Activated CD4-positive, alpha-beta T cell treated with anti-CD3 and anti-CD28 coated beads for 36 hours (primary cell): ENCODE measurements at regions of chr5 and their contacts with region 1.

Region 1: DNA sequence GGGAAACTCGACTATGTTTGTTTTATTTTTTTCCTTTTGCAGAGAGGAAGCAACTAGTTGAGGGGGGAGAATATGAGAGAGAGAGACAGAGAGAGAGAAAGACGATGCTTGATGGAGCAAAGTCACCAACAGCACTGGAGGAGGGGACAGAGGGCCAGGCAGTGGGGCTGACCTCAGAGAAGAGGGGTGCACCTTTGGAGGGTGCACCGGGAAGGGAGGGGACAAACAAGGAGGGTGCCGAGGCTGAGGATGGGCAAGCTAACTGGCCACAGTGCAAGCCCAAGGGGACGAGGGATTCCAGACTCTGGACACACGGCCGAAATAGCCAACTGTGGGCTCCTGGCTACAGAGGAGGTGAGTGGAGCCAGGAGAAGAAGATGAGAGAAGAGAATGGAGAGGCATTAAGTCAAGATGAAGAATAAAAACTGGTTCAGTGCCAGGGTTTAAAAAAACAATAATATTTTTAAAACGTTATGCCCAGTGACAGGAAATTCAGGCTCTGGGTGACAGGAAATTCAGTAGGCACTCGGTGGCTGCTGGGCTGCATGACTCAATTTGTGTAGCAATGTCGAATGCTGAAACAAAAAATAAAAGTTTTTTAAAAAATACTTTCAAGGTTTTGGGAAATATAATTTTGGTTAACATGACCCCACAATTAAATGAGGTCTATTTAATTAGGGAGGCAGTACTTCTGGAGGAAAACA is 13.3 kb upstream of the GLRX start:
- DNase-seq: peak; percentile 49
- ATAC-seq: no peak
- H3K4me3 Mint-ChIP-seq: peak overlapping the region; percentile 79
- H3K27ac Mint-ChIP-seq: peak overlapping the region; percentile 91
- H3K4me1 Mint-ChIP-seq: peaks cover 44% of the 10 kb centered on the region
- H3K27me3 Mint-ChIP-seq: no peaks in the 10 kb centered on the region

Region 2: DNA sequence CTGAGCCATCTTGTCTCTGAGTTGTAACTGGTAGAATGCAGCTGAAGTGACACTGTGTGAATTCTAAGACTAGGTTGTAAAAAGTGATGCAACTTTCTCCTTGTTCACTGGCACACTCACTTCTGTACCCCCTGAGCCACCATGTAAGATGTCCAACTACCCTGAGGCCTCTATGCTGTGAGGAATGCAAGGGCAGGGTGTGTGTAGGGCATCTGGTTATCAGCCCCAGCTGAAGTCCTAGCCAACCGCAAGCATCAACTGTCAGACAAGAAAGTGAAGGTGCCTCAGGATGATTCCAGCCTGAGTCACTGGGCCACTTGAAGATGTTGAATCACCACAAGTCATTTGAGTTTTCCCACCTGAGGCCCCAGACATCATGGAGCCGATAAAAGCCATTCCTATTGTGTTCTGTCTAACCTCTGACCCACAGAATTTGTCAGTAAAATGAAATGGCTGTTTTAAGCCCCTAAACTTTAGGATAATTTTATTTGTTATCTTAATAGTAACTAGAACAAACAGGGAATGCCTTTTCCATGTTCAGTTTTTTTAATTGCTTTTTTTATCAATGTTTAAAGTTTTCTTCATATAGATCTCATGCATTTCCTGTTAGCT is 123.4 kb before region 1 on chr5:
- CTCF ChIA-PET with region 1: no interaction called
- POLR2A ChIA-PET with region 1: no interaction called
- intact Hi-C with region 1: no loop called
- DNase-seq: peak; percentile 78
- ATAC-seq: peak; percentile 95
- H3K4me3 Mint-ChIP-seq: no peak overlapping the region
- H3K27ac Mint-ChIP-seq: no peak overlapping the region
- H3K4me1 Mint-ChIP-seq: peaks cover 21% of the 10 kb centered on the region
- H3K27me3 Mint-ChIP-seq: peaks cover 4% of the 10 kb centered on the region

Region 3: GRCh38 chr5:95808686-95809413 is 27.0 kb before region 1 on chr5:
- CTCF ChIA-PET with region 1: interaction called, 6 read pairs
- POLR2A ChIA-PET with region 1: interaction called, 3 read pairs
- intact Hi-C with region 1: loop called in 1 of 2 experiments (anchors 2 kb)
- DNase-seq: peak; percentile 87
- ATAC-seq: peak; percentile 99
- H3K4me3 Mint-ChIP-seq: peak overlapping the region; percentile 28
- H3K27ac Mint-ChIP-seq: peak overlapping the region; percentile 85
- H3K4me1 Mint-ChIP-seq: peaks cover 56% of the 10 kb centered on the region
- H3K27me3 Mint-ChIP-seq: no peaks in the 10 kb centered on the region